Activated naive CD4-positive, alpha-beta T cell treated with anti-CD3 and anti-CD28 coated beads for 36 hours (primary cell): ENCODE measurements at regions of chr20 and their contacts with region 1.

Region 1: DNA sequence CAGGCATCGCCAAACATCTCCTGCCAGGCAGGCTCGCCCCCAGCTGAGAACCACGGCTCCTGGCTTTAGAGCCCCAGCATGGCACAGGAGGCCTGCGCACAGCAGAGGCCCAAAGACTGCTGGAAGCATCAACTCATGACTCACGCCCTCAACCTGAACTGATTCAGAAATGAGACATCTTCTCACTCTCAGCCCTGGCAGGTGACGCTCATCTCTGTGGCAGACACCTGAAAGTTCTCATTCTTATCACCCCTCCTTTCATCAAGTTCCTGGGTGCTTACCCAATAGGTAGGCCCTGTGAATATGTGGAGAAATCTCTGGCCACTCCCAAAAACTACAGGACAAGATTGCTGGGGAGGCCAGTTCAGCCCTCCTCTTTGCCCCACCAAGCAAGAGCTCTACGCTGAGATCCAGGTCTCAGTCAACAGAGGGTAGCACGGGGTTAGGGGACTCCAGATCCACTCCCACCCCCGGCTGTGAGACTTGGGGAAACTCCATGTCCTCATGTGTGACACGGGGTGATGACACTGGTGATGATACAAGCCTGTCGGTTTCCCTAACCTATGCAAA is 11.3 kb downstream of the NFATC2 start:
- DNase-seq: peak; percentile 93
- H3K4me3 Mint-ChIP-seq: peak overlapping the region; percentile 65
- H3K27ac Mint-ChIP-seq: peak overlapping the region; percentile 92
- H3K4me1 Mint-ChIP-seq: peaks cover 94% of the 10 kb centered on the region
- H3K27me3 Mint-ChIP-seq: no peaks in the 10 kb centered on the region

Region 2: GRCh38 chr20:51404298-51405060 is 126.7 kb before region 1 on chr20:
- CTCF ChIA-PET with region 1: no interaction called
- intact Hi-C with region 1: loop called (anchors 1 kb)
- DNase-seq: peak; percentile 87
- H3K4me3 Mint-ChIP-seq: no peak overlapping the region
- H3K27ac Mint-ChIP-seq: peak overlapping the region; percentile 93
- H3K4me1 Mint-ChIP-seq: peaks cover 64% of the 10 kb centered on the region
- H3K27me3 Mint-ChIP-seq: no peaks in the 10 kb centered on the region

Region 3: DNA sequence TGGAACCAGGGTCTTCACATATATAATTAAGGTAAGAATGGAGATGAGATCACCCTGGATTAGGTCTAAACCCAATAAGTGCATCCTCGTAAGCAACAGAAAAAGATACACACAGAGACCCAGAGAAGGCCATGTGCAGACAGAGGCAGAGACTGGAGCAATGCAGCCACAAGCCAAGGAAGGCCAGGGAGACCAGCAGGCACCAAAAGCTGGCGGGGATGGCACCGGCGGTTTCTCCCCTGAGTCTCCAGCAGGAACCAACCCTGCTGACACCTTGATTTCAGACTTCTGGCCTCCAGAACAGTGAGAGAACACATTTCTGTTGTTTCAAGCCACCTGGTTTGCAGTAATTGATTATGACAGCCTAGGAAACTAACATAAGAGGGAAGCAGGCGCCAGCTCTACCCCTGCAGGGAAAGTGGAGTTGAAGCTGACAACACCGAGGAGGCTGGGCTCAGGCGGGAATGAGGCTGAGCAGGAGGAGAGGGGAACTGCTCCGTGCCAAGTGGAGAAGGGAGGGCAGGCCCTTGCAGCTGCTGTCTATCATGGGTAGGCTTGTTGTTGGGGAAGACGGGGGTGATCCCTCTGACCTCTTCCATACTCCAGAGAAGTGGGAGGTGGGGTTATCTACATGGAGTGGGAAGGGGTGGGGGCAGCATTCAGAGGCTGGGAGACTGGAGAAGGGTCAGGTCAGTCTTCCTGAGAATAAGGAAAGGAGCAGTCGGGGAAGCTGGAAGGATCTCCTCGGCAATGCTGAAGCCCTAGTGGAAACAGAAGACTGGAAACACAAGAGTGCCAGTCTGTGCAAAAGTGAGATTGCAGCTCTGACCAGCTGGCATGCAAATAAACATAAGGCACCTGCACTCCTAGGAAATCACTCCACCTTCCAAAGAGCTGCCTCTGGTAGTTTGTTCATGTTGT is 61.4 kb before region 1 on chr20:
- CTCF ChIA-PET with region 1: interaction called, 4 read pairs
- intact Hi-C with region 1: loop called (anchors 1 kb)
- DNase-seq: no peak
- H3K4me3 Mint-ChIP-seq: no peak overlapping the region
- H3K27ac Mint-ChIP-seq: no peak overlapping the region
- H3K4me1 Mint-ChIP-seq: peaks cover 32% of the 10 kb centered on the region
- H3K27me3 Mint-ChIP-seq: no peaks in the 10 kb centered on the region

Region 4: DNA sequence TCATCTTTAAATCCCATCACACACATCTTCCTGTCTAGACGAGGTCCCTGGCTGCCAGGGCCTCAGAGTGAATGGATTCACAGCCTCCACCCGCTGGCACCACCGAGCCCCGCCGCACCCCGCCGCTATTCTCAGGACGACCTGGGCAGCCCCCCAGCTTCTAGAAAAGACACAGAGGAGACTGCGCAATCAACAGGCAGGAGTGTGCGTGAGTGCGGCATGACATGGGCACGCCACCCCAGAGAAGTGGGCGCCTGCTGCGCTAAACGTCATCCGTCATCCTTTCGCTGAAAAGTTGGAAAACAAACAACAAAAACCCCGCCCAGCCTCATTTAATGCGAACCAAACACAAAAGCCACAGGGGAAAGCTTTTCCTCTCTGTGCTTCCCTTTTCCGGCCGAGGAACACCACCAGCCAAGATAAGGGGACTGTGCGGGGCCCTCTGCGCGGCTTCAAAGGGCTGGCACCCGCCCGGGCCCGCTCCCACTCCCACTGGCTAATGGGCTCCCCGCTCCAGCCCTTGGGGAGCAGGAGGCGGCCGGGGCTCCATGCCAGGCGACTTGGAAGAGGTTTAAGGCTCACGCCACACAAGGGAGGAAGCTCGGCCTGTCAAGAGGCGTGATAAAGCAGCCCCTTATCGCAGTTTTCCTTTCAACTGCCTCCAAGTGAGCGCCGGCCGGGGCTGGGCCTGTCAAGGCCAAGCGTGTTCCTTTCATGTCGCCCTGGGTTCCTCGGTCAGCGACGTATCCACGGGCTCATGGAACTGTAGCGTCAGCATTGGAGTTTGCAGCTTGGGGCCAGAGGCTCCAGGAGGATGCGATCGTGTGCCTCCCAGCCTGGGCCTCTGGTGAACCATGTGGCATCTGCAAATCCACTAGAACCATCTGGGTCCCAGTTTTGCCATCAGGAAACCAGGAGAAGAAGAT is 38.8 kb before region 1 on chr20:
- CTCF ChIA-PET with region 1: interaction called, 3 read pairs
- intact Hi-C with region 1: loop called (anchors 1 kb)
- DNase-seq: no peak
- H3K4me3 Mint-ChIP-seq: no peak overlapping the region
- H3K27ac Mint-ChIP-seq: peak overlapping the region; percentile 93
- H3K4me1 Mint-ChIP-seq: peaks cover 97% of the 10 kb centered on the region
- H3K27me3 Mint-ChIP-seq: no peaks in the 10 kb centered on the region

Region 5: DNA sequence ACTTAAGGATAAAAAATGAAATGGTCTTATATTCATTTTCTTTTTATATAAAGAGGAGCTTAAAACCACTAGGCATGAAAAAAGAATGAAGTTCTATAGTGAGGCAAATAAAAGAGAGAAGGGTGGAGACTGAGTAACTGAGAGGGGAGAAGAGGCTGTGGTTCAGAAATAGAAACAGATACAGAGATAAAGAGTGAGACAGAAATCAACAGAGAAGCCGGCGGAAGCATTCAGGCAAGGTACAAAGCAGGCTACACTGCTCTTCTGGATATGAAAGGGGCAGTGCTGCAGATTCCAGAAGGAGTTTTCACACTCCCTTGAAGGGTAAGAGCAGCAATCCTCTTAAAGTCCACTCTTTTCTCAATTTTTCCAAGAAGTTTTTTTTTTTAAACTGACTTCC is 18.6 kb before region 1 on chr20:
- CTCF ChIA-PET with region 1: interaction called, 7 read pairs
- intact Hi-C with region 1: loop called (anchors 1 kb)
- DNase-seq: peak; percentile 45
- H3K4me3 Mint-ChIP-seq: no peak overlapping the region
- H3K27ac Mint-ChIP-seq: peak overlapping the region; percentile 74
- H3K4me1 Mint-ChIP-seq: peaks cover 75% of the 10 kb centered on the region
- H3K27me3 Mint-ChIP-seq: no peaks in the 10 kb centered on the region

Region 6: GRCh38 chr20:51573576-51574243 is 42.5 kb after region 1 on chr20:
- CTCF ChIA-PET with region 1: no interaction called
- intact Hi-C with region 1: loop called (anchors 1 kb)
- DNase-seq: no peak
- H3K4me3 Mint-ChIP-seq: no peak overlapping the region
- H3K27ac Mint-ChIP-seq: no peak overlapping the region
- H3K4me1 Mint-ChIP-seq: peaks cover 13% of the 10 kb centered on the region
- H3K27me3 Mint-ChIP-seq: peaks cover 2% of the 10 kb centered on the region

Region 7: DNA sequence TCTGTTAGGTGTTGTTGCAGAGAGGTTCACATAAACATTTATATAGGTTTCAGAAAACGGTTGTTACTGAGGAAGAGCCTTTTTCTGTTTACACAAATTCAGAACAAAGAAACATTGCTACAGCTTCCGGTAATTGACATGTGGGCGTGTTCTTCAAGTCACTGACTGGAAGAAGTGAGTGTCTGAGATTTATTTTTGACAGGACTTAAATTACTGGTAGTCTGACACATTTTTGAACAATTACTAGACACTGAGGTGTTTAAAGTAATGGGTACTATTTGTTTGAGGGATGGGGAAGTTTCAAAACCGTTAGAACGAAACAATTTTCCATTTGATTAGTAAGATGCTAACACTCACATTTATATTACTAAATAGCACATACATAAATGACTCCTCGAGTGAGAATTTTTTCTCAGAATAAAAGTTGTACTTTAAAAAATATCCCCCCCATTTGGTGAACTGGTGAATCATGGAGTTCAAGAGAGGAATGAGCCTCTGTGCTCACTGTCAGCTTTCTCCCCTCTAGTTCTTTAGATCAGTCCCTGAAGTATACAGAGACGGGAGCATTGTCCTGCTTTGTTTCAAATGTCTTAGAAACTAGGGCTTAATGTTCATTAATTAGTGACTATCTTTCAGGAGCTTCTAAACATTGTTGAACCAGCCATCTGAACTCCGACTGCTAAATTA is 1539.6 kb after region 1 on chr20:
- CTCF ChIA-PET with region 1: no interaction called
- intact Hi-C with region 1: loop called (anchors 5 kb)
- DNase-seq: peak; percentile 80
- H3K4me3 Mint-ChIP-seq: peak overlapping the region; percentile 18
- H3K27ac Mint-ChIP-seq: peak overlapping the region; percentile 98
- H3K4me1 Mint-ChIP-seq: peaks cover 63% of the 10 kb centered on the region
- H3K27me3 Mint-ChIP-seq: no peaks in the 10 kb centered on the region